Panc1 (cell line): ENCODE measurements at regions of chr6 and their contacts with region 1.

Region 1: DNA sequence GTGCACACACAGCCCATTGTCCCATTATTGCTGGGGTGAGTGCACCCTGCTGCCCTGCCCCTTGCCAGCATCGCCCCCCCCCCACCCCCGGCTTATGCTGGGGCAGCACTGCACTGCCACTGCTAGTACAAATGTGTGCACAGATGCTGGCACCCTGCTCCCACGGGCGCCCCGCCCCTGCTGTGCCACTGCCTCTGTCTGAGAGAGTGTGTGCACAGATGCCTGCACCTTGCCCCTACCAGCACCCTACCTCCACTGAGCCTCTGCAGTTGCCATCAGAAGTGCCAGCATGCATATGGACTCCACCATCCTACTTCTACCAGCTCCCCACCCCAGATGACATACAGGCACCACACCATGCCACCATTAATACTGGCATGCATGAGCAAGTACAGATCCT is 454.6 kb upstream of the KHDRBS2 start:
- DNase-seq: no peak
- ATAC-seq: no peak
- H3K4me3 ChIP-seq: no peak overlapping the region
- H3K27ac ChIP-seq: no peak overlapping the region
- H3K4me1 ChIP-seq: no peaks in the 10 kb centered on the region
- H3K27me3 ChIP-seq: no peaks in the 10 kb centered on the region
- CTCF ChIP-seq: no peak

Region 2: GRCh38 chr6:62565774-62566173 is 174.8 kb before region 1 on chr6:
- CTCF ChIA-PET with region 1: no interaction called
- POLR2A ChIA-PET with region 1: no interaction called
- in situ Hi-C with region 1: no loop called
- intact Hi-C with region 1: no loop called
- DNase-seq: no peak
- ATAC-seq: no peak
- H3K4me3 ChIP-seq: no peak overlapping the region
- H3K27ac ChIP-seq: no peak overlapping the region
- H3K4me1 ChIP-seq: no peaks in the 10 kb centered on the region
- H3K27me3 ChIP-seq: no peaks in the 10 kb centered on the region
- CTCF ChIP-seq: no peak

Region 3: GRCh38 chr6:62764841-62765240 is 24.2 kb after region 1 on chr6:
- CTCF ChIA-PET with region 1: no interaction called
- POLR2A ChIA-PET with region 1: no interaction called
- in situ Hi-C with region 1: no loop called
- intact Hi-C with region 1: loop called (anchors 1 kb)
- DNase-seq: no peak
- ATAC-seq: no peak
- H3K4me3 ChIP-seq: no peak overlapping the region
- H3K27ac ChIP-seq: no peak overlapping the region
- H3K4me1 ChIP-seq: no peaks in the 10 kb centered on the region
- H3K27me3 ChIP-seq: no peaks in the 10 kb centered on the region
- CTCF ChIP-seq: no peak

Region 4: GRCh38 chr6:63121166-63121565 is 380.6 kb after region 1 on chr6:
- CTCF ChIA-PET with region 1: no interaction called
- POLR2A ChIA-PET with region 1: no interaction called
- in situ Hi-C with region 1: no loop called
- intact Hi-C with region 1: no loop called
- DNase-seq: no peak
- ATAC-seq: no peak
- H3K4me3 ChIP-seq: no peak overlapping the region
- H3K27ac ChIP-seq: no peak overlapping the region
- H3K4me1 ChIP-seq: no peaks in the 10 kb centered on the region
- H3K27me3 ChIP-seq: no peaks in the 10 kb centered on the region
- CTCF ChIP-seq: peak; percentile 26; the same call in 1 of the 2 replicates